ENCODE measurements at regions of chr6 and their contacts with region 1.

Region 1: GRCh38 chr6:166775180-166776081 is 148.4 kb upstream of the RPS6KA2 start:
- DNase-seq: peak; percentile 54
- ATAC-seq: peak; percentile 65
- H3K4me3 Mint-ChIP-seq: no peak overlapping the region
- H3K27ac Mint-ChIP-seq: peak overlapping the region; percentile 42; the same call in 1 of the 2 replicates
- H3K4me1 Mint-ChIP-seq: peaks cover 25% of the 10 kb centered on the region
- H3K27me3 Mint-ChIP-seq: peaks cover 3% of the 10 kb centered on the region; the same call in 1 of the 2 replicates
- CTCF ChIP-seq: peak; percentile 64; the same call in 1 of the 2 replicates

Region 2: GRCh38 chr6:166712286-166713228 is 62.9 kb before region 1 on chr6:
- CTCF ChIA-PET with region 1: interaction called, 22 read pairs
- POLR2A ChIA-PET with region 1: no interaction called
- DNase-seq: peak; percentile 41
- ATAC-seq: peak; percentile 86
- H3K4me3 Mint-ChIP-seq: no peak overlapping the region
- H3K27ac Mint-ChIP-seq: no peak overlapping the region
- H3K4me1 Mint-ChIP-seq: peaks cover 6% of the 10 kb centered on the region
- H3K27me3 Mint-ChIP-seq: peaks cover 8% of the 10 kb centered on the region
- CTCF ChIP-seq: no peak

Region 3: DNA sequence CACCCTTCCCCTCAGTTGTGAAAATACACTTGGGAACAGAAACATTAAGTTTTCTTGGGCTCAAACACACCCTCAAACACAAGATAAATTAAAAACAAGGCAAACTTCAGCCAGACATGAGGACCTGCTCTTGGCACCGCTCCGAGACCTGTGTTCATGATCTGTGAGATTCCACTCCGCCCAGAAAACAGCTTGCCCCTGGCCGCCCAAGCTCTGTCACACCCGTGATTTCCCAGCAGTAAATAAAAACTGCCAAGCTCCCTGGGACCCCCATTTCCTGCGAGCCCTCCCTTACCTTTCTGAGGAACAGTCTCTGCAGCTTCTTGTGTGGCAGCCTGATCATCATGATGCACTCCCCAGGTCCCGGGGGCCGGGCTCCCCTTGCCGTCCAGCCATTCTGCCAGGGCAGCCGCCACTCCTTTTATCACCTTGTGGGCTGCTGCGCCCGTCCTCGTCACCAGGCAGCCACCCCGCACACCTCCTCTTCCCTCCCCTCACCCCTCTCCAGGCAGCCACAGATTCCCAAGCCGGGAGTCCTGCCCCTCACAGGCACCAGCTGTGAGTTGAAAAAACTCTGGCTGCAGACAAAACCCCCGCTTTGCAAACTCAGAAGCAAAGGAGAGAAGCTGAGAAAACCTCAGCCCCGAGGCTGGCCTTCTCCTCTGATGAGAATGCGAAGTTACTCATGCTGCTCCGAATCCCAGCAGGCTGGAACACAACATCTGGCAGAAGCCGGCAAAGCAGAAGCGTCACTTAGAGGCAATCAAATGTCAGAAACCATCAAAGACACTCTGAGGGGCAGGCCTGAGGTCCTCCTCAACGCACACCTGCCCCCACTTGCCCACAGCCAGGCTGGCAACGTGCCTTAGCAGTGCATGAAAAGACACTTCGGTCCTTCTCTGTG is 17.9 kb before region 1 on chr6:
- CTCF ChIA-PET with region 1: interaction called, 22 read pairs
- POLR2A ChIA-PET with region 1: no interaction called
- DNase-seq: no peak
- ATAC-seq: peak; percentile 74
- H3K4me3 Mint-ChIP-seq: no peak overlapping the region; the same call in 1 of the 2 replicates
- H3K27ac Mint-ChIP-seq: no peak overlapping the region; the same call in 1 of the 2 replicates
- H3K4me1 Mint-ChIP-seq: peaks cover 39% of the 10 kb centered on the region
- H3K27me3 Mint-ChIP-seq: no peaks in the 10 kb centered on the region; the same call in 1 of the 2 replicates
- CTCF ChIP-seq: no peak

Region 4: DNA sequence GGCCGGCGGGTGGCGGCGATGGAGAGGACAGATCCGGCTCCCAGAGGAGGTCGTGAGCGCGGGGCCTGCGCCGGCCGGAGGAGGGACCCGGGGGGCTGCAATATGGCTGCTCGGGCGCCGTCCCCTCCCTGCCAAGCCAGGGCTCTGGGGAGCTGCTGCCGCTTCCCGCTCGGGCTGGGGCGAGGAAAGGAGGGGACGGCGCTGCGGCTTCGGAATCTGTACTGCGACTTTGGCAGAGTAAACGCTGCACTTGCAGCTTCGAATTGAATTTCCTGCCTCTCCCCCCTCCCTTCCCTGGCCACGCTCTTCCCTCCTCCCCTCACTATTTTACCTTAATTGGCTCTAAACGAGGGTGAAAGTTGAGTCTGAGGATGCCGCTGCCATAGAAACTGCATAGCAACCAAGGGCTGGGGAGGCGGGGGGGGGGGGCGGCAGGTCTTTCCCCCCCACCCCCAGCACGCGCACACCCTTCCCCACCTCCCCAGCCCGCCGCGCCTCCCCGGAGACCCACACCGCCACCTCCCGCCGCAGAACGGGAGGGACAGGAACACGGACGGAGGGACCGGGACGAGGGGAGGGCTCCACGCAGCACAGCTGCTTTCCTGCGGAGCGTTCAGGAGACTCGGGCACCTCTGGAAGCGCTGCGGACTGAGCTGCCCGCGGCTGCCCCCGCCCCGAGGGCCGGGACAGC is 87.0 kb after region 1 on chr6:
- CTCF ChIA-PET with region 1: interaction called, 20 read pairs
- POLR2A ChIA-PET with region 1: interaction called, 3 read pairs
- DNase-seq: peak; percentile 77
- ATAC-seq: peak; percentile 87
- H3K4me3 Mint-ChIP-seq: peak overlapping the region; percentile 90
- H3K27ac Mint-ChIP-seq: no peak overlapping the region
- H3K4me1 Mint-ChIP-seq: peaks cover 8% of the 10 kb centered on the region
- H3K27me3 Mint-ChIP-seq: peaks cover 30% of the 10 kb centered on the region
- CTCF ChIP-seq: no peak

Region 5: DNA sequence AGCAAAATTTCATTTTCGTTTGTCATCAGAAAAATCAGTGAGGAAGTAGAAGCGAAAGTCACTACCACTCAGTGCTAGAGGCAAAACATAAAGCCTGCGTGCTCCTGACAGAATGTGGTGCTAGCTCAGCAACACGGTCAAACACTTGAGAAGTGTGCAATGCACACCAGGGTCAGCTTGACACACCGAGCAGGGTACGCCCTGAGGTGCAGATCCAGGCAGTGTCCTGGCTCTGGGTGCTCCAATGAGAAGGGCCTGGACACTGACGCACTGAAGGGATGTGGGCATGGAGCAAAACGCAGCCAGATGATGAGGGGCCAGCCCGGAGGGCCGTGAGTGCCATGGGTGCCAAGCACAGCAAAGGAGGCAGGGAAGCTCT is 175.0 kb after region 1 on chr6:
- CTCF ChIA-PET with region 1: interaction called, 44 read pairs
- POLR2A ChIA-PET with region 1: interaction called, 3 read pairs
- DNase-seq: no peak
- ATAC-seq: no peak
- H3K4me3 Mint-ChIP-seq: no peak overlapping the region
- H3K27ac Mint-ChIP-seq: peak overlapping the region; percentile 91
- H3K4me1 Mint-ChIP-seq: peaks cover 29% of the 10 kb centered on the region
- H3K27me3 Mint-ChIP-seq: peaks cover 6% of the 10 kb centered on the region
- CTCF ChIP-seq: no peak

Region 6: DNA sequence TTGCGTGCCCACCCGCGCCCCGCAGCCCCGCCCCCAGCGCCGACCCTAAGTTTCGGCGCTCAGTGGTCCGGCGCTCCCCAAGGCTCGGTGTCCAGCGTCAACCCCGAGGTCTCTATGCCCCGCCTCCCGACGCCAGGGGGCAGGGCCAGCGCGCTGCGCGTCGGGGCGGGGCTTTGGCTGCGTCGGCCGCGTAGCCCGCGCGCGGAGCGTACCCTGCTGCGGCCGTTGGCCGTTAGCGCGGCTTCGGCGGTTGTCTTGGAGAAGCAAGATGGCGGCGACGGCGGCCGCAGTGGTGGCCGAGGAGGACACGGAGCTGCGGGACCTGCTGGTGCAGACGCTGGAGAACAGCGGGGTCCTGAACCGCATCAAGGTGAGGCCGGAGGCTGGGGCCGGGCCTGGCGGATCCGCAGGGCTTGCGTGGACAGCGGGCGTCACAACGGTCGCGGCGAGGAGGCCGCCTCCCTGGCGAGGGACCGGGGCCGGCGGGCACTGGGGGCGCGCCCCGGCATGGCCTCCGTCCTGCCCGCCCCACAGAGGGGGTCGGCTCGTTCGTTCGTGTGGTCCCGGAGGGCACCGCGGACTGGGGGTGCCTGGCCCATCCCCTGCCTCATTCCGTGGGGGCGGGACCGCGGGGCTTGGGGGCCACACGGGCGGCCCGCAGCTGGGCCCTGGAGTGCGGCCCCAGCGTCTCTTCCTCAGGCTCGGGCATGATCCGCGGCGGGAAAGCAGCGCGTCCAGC is 223.9 kb after region 1 on chr6 and contains the start of gene CEP43:
- CTCF ChIA-PET with region 1: interaction called, 30 read pairs
- POLR2A ChIA-PET with region 1: no interaction called
- DNase-seq: peak; percentile 92
- ATAC-seq: peak; percentile 96
- H3K4me3 Mint-ChIP-seq: peak within 1 kb of the TSS; percentile 89
- H3K27ac Mint-ChIP-seq: peak within 1 kb of the TSS; percentile 65; the same call in 1 of the 2 replicates
- H3K4me1 Mint-ChIP-seq: peaks cover 27% of the 10 kb centered on the region
- H3K27me3 Mint-ChIP-seq: no peaks in the 10 kb centered on the region
- CTCF ChIP-seq: no peak
- total RNA-seq, gene CEP43: 23.4 to 25.6 TPM (median 25.1 TPM) in 3 replicates

Region 7: GRCh38 chr6:167163476-167164011 is 388.1 kb after region 1 on chr6:
- CTCF ChIA-PET with region 1: interaction called, 15 read pairs
- POLR2A ChIA-PET with region 1: no interaction called
- DNase-seq: peak; percentile 63
- ATAC-seq: peak; percentile 92
- H3K4me3 Mint-ChIP-seq: peak overlapping the region; percentile 47
- H3K27ac Mint-ChIP-seq: peak overlapping the region; percentile 98
- H3K4me1 Mint-ChIP-seq: peaks cover 54% of the 10 kb centered on the region
- H3K27me3 Mint-ChIP-seq: no peaks in the 10 kb centered on the region
- CTCF ChIP-seq: no peak